AG04449 (cell line): ENCODE measurements at regions of chr6 and their contacts with region 1.

Region 1: GRCh38 chr6:33824461-33825154 is 20.8 kb upstream of the MLN start:
- DNase-seq: no peak
- H3K4me3 ChIP-seq: no peak overlapping the region
- CTCF ChIP-seq: no peak

Region 2: GRCh38 chr6:33481189-33481588 is 343.4 kb before region 1 on chr6:
- CTCF ChIA-PET with region 1: no interaction called
- POLR2A ChIA-PET with region 1: no interaction called
- DNase-seq: no peak
- H3K4me3 ChIP-seq: no peak overlapping the region
- CTCF ChIP-seq: no peak

Region 3: DNA sequence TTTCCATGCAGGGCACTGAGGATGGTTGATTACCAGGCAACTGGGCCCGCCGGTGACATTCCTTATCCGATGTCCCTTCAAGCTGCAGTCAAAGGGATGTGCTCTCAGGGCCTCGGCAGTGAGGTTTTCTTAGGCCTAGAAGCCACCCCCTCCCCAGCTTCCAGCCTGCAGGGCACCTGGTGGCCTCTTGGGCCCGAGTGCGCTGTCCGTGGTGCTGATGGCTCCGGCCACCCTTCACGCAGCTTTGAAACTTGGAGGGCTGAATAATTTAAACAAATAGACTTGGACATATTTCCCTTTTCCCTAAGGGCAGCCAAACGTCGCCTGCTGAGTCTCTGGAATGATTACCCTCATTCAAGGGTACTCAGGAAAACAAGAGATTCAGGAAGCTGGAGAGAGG is 11.9 kb before region 1 on chr6:
- CTCF ChIA-PET with region 1: interaction called, 10 read pairs
- POLR2A ChIA-PET with region 1: interaction called, 3 read pairs
- DNase-seq: no peak
- H3K4me3 ChIP-seq: no peak overlapping the region
- CTCF ChIP-seq: peak; percentile 63